Activated CD8-positive, alpha-beta T cell treated with anti-CD3 and anti-CD28 coated beads for 36 hours (primary cell): ENCODE measurements at regions of chr5 and their contacts with region 1.

Region 1: DNA sequence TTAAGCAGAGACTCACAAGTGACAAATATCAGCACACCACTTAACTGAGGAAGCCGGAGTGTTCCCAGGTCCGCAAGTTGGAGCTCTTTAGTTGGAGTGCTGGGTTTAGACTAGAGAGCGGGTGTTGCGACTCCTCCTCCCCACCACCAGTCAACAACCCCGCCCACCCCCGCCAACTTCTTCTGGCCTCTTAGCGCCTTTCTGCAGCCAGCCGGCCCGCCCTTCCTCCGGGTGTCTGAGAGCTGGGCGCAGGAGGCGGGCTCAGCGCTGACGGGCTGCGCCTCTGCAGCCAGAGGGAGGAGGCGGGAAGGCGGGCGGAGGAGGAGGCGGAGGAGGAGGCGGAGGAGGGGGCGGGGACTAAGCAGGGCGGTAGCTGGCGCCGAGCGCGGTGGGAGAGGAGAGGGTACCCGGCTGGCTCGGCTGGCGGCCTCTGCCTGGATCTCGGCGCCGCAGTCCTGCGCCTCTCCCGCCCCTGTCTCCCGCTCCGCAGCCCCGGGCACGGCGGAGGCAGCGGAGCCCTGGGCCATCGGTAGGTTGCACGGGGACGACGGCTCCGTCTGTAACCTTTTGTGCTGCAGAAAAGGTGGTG is at the start of gene MACIR:
- DNase-seq: peak; percentile 96
- ATAC-seq: peak; percentile 94
- H3K4me3 Mint-ChIP-seq: peak within 1 kb of the TSS; percentile 92
- H3K27ac Mint-ChIP-seq: peak within 1 kb of the TSS; percentile 84
- H3K4me1 Mint-ChIP-seq: peaks cover 26% of the 10 kb centered on the region
- H3K27me3 Mint-ChIP-seq: peaks cover 3% of the 10 kb centered on the region
- CTCF ChIP-seq: no peak
- total RNA-seq, gene MACIR: 8.6 to 8.8 TPM

Region 2: DNA sequence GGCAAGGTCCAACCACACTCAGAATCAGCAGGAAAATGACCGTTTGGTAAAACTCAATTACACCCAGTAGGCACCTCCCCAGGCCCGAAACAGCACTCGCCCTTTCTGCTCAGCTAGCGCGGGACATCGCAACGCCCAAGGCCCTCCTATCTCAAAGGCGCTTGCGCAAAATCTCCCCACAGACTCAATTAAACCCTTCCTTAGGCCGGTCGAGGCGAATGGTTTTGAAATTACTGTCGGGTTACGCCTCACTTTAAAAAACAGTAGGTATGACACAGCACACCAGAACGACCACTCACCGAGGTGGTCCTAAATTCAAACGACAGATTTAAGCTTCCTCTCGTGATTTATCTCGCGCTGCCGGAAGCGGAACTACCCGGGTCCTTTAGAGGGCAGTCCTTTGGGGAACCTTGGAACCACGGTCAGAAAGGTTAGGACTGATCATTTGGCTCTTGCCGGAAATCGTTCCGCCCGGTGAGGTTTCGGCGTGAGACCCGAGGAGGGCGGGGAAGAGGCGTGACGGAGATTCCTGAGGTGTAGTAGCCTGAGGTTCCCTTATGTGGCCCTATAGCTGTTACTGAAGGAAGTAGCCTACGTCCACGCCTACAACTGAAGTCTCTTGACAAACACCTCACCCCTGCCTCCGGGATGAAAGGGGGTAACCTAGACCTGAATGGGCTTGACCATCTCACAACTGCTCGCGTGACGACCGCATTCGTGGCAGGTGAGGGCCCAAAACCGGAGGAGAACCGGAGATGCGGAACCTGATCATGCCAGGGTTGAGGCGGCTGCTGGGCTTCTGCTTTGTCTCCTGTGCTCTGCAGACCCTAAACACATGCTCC is 138.5 kb before region 1 on chr5 and contains the starts of genes GIN1 and PPIP5K2:
- CTCF ChIA-PET with region 1: no interaction called
- POLR2A ChIA-PET with region 1: interaction called, 16 read pairs
- intact Hi-C with region 1: no loop called
- DNase-seq: peak; percentile 98
- ATAC-seq: peak; percentile 89
- H3K4me3 Mint-ChIP-seq: peak within 1 kb of the TSS; percentile 97
- H3K27ac Mint-ChIP-seq: peak within 1 kb of the TSS; percentile 99
- H3K4me1 Mint-ChIP-seq: peaks cover 39% of the 10 kb centered on the region
- H3K27me3 Mint-ChIP-seq: no peaks in the 10 kb centered on the region
- CTCF ChIP-seq: no peak
- total RNA-seq, gene GIN1: 9.8 to 11.7 TPM
- total RNA-seq, gene PPIP5K2: 50.5 to 59.5 TPM

Region 3: GRCh38 chr5:103271570-103272289 is 13.3 kb after region 1 on chr5:
- CTCF ChIA-PET with region 1: interaction called, 10 read pairs
- POLR2A ChIA-PET with region 1: interaction called, 12 read pairs
- intact Hi-C with region 1: no loop called
- DNase-seq: no peak
- ATAC-seq: no peak
- H3K4me3 Mint-ChIP-seq: no peak overlapping the region
- H3K27ac Mint-ChIP-seq: no peak overlapping the region
- H3K4me1 Mint-ChIP-seq: peaks cover 16% of the 10 kb centered on the region
- H3K27me3 Mint-ChIP-seq: no peaks in the 10 kb centered on the region
- CTCF ChIP-seq: no peak

Region 4: DNA sequence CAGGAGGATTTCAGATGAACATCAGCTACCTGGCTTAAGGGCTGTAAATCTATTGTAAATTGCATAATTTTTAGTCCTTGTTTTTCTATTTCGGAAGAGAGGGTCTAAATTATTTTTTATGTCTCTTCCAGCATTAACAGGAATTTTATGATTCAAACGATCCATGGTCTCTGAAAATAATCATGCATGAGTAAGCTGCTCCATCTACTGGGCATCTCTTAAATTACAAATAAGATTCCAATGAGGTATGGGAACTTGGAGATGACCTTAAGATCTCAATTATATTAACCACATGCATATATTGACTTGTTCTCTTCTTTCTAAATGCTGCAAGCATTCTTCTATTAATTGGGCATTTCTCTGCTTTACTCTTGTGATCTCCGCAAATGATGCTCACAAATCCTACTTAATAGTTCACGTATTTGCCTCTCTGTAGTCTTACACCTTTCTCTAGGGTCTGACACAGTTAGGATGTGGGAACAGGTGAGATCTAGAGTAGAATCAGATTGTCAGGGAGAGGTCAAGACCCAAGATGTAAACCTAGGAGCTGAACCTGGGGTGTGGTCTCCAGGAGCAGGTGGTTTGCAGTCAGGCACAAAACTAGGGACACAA is 217.3 kb after region 1 on chr5:
- CTCF ChIA-PET with region 1: interaction called, 11 read pairs
- POLR2A ChIA-PET with region 1: no interaction called
- intact Hi-C with region 1: no loop called
- DNase-seq: no peak
- ATAC-seq: no peak
- H3K4me3 Mint-ChIP-seq: no peak overlapping the region
- H3K27ac Mint-ChIP-seq: no peak overlapping the region
- H3K4me1 Mint-ChIP-seq: no peaks in the 10 kb centered on the region
- H3K27me3 Mint-ChIP-seq: peaks cover 10% of the 10 kb centered on the region
- CTCF ChIP-seq: peak; percentile 70